HCT116 (cell line): ENCODE measurements at regions of chr19 and their contacts with region 1.

Region 1: DNA sequence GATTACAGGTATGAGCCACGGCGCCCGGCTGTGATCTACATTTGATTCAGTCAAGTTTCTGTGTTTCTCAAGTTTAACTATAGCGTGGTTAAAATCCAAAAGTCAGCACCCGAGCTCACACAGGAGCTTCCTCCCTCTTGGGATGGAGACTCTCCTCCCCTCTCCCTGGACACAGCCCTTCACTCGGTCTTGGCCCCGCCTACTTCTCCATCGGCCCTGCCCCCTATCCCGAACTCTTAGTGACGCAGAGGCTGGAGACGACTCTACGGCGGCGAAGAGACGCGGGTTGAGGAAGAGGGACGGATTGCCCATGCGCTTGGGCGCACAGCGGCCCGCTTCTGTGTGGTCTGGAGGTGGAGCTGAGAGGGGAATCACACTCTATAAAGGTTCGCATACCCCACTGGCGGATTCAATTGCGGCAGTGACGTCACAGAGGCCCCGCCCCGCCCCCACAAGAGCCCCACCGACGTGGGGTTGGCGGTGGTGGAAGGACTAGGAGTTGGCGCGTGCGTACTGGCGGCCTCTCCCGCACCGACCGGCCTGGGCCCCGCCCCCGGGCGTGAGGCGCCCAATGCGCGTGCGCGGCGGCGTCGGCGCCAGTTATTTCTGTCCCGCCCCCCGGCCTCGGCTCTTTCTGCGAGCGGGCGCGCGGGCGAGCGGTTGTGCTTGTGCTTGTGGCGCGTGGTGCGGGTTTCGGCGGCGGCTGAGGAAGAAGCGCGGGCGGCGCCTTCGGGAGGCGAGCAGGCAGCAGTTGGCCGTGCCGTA is at the start of gene TRIM28:
- DNase-seq: peak; percentile 96
- ATAC-seq: peak; percentile 92
- H3K4me3 ChIP-seq: peak within 1 kb of the TSS; percentile 90 to 94
- H3K27ac ChIP-seq: peak within 1 kb of the TSS; percentile 77
- H3K4me1 ChIP-seq: peaks cover 14 to 27% of the 10 kb centered on the region in 2 experiments
- H3K27me3 ChIP-seq: peaks cover 10% of the 10 kb centered on the region; the same call in 1 of the 2 replicates
- CTCF ChIP-seq: no peak
- POLR2A ChIP-seq: peak; percentile 88
- RAD21 ChIP-seq: no peak
- total RNA-seq, gene TRIM28: 908 TPM

Region 2: GRCh38 chr19:58572818-58573657 is 29.0 kb after region 1 on chr19 and contains the start of gene MZF1:
- CTCF ChIA-PET with region 1: no interaction called
- POLR2A ChIA-PET with region 1: interaction called, 7 read pairs
- RAD21 ChIA-PET with region 1: no interaction called
- intact Hi-C with region 1: loop called (anchors 1 kb)
- DNase-seq: peak; percentile 100
- ATAC-seq: peak; percentile 70
- H3K4me3 ChIP-seq: peak within 1 kb of the TSS; percentile 78 to 86
- H3K27ac ChIP-seq: peak within 1 kb of the TSS; percentile 91
- H3K4me1 ChIP-seq: peaks cover 12 to 28% of the 10 kb centered on the region in 2 experiments
- H3K27me3 ChIP-seq: no peaks in the 10 kb centered on the region
- CTCF ChIP-seq: no peak
- POLR2A ChIP-seq: no peak
- RAD21 ChIP-seq: no peak
- total RNA-seq, gene MZF1: 33.0 TPM